Aorta (tissue), 5 donors: ENCODE measurements at regions of chr13 and their contacts with region 1.

Region 1: GRCh38 chr13:44237276-44237767 is 136.3 kb upstream of the SERP2 start:
- DNase-seq: peak in 1 of 2 donors; percentile 73
- ATAC-seq: peak; percentile 95
- H3K4me3 ChIP-seq: no peak overlapping the region
- H3K27ac ChIP-seq: peak overlapping the region; percentile 33 to 97
- H3K4me1 ChIP-seq: peaks cover 6% of the 10 kb centered on the region in 2 donors
- H3K27me3 ChIP-seq: no peaks in the 10 kb centered on the region

Region 2: DNA sequence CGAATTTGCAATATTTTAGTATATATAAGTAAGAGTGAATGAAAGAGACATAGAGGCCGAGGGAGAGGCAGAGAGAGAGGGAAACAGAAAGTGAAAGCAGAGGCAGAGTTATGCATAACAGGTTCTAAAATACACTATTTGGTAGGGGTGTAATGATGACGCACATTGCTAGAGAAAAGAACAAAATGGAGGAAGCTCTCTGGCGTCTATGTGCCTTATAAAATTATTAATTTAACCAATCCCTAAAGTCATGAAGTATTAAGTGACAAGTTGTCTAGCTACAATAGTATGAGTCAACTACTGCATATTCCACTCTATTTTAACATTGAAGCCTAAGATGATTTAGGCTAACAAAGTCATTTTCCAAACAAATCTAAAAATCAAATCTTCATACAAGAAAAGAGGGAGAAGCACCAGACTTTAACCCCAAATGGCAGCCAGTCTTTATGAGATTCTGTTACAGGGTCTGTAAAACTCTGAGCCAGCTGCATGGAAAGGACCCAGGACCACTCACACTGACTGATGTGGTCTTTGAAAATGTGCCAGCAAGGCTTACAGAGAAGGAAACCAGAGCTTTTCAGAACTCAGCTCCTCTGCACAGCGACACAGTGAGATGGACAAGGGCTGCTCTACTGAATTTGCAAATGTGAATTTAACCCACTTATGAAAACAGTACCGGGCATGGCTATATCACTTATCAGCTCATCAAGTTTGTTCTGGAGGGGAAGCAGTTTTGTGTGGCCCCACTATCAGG is 37.3 kb after region 1 on chr13:
- intact Hi-C with region 1: loop called (anchors 5 kb)
- DNase-seq: no peak
- ATAC-seq: peak; percentile 77
- H3K4me3 ChIP-seq: no peak overlapping the region
- H3K27ac ChIP-seq: peak overlapping the region; percentile 89 to 94
- H3K4me1 ChIP-seq: peaks cover 5 to 11% of the 10 kb centered on the region in 2 donors
- H3K27me3 ChIP-seq: no peaks in the 10 kb centered on the region

Region 3: GRCh38 chr13:44287958-44288357 is 50.6 kb after region 1 on chr13:
- intact Hi-C with region 1: no loop called
- DNase-seq: no peak
- ATAC-seq: no peak
- H3K4me3 ChIP-seq: no peak overlapping the region
- H3K27ac ChIP-seq: no peak overlapping the region
- H3K4me1 ChIP-seq: no peaks in the 10 kb centered on the region
- H3K27me3 ChIP-seq: no peaks in the 10 kb centered on the region

Region 4: DNA sequence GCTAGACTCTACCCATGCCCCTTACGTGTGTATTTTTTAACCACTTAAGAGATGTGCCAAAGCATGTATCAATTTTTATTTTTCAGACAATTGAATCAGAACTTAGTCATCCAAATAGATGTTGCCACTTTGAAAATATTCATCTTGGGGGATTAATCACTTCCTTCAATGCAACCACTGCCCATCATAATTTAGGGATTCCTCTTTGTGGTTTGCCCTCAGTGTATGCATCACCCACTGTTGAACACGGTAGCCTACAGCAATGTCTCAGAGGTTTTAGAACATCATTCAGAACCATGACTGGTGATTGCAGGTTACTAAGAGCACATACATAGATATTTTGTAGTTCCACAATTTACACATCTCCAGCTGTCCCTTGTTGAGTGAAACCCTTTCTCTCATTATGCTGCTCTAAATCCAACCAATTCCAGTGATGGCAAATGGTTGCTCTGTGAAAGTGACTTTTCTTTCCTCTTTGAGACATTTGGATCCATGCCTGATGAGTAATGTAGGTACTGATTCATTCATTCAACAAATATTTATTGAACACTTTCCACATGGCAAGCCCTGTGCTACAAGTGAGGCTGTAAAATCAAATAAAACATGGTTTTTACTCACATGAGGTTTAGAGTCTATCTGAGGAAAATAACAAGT is 75.7 kb after region 1 on chr13:
- intact Hi-C with region 1: loop called in 1 of 2 experiments (anchors 5 kb)
- DNase-seq: no peak
- ATAC-seq: no peak
- H3K4me3 ChIP-seq: no peak overlapping the region
- H3K27ac ChIP-seq: no peak overlapping the region
- H3K4me1 ChIP-seq: peaks cover 5 to 6% of the 10 kb centered on the region in 2 donors
- H3K27me3 ChIP-seq: no peaks in the 10 kb centered on the region